SK-N-SH (cell line): ENCODE measurements at regions of chr9 and their contacts with region 1.

Region 1: DNA sequence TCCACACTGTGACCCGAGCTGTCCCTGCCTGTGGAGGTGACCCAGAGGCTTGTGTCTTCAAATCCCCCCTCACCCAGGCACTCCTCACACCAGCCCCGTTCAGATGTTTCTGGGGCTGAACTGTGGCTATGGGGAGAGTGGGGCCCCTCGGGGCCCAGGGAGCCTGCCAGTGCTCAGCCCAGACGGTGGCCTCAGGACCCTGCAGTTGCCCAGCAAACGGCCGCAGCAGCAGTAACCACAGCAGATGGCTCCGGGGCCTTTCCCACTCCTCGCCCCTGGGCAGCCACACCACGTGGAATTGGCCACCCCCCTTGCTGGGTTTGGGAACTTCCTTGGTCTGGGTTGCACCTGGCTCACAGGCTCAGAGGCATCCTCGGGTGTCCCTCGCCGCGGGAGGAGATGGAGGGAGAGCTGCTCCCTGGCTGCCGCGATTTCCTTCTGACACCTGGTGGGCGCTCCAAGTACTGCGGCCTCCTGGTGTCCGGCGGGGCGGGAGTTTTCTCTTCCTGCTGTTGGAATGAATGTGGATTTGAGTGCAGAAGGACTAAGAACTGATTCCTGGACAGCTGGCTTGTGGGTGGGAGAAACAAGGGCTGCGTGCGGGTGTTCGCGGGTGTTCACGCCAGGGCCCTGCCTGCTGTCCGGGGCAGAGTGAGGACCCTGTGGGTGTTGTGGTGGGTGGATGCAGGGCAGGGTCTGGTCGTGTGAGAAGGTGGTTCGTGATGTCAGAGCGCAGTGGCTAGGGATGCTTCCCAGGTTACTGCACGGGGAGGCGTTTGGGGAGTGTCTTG is 97.5 kb downstream of the COL5A1 start:
- DNase-seq: peak; percentile 94
- H3K4me3 ChIP-seq: no peak overlapping the region
- H3K27ac ChIP-seq: 0 out of 4 replicates have a peak overlapping the region, but pooled peaks of 1 of the 2 experiments have one; percentile 18
- H3K4me1 ChIP-seq: peaks cover 4 to 12% of the 10 kb centered on the region in 2 experiments; a peak in 2 of 4 replicates
- H3K27me3 ChIP-seq: no peaks in the 10 kb centered on the region
- CTCF ChIP-seq: peak; percentile 77
- EP300 ChIP-seq: no peak
- RAD21 ChIP-seq: peak; percentile 91

Region 2: DNA sequence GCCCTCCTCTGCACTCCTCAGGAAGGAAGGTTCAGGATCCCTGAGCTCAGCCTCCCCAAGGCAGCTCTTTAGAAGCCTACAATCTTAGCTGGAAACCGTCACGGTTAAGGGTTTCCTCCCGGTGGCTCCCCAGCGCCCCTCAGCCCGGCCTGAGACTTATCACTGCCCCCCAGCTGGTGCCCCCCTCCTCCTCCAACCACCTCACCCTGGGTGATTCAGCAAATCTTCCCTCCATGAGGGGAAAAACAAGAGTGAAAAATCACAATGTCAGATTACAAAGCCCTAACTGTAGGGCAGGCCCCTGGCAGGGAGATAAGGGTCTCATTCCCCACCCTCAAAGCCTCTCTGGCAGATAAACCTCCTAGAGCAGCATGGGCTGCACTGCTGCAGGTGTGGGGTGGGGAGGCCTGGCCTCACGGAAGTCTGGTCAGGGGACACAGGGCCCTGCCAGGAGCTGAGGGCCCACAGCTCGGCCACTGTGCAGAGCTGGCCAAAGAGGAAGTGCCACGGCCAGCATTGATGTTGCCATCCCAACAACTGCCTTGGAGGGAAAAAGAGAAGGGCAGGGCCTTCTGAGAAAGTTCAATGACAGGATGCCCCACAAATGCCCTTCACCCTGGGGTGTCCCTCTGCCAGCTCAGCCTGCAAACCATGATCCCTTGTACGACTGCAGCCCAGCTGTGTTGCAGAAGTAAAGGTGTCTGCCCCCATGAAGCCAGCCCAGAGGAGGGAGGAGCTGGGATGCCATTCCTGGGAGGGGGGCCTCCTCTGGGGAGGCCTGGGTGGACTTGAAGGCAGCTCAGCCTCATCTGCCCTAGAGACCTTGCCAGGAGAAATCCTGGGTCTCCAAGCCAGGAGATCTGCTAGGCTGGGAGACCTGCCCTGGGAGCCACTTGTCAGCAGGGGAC is 1734.7 kb before region 1 on chr9:
- CTCF ChIA-PET with region 1: no interaction called
- POLR2A ChIA-PET with region 1: no interaction called
- DNase-seq: peak; percentile 20
- H3K4me3 ChIP-seq: no peak overlapping the region
- H3K27ac ChIP-seq: no peak overlapping the region
- H3K4me1 ChIP-seq: no peaks in the 10 kb centered on the region; a peak in 1 of 4 replicates
- H3K27me3 ChIP-seq: peaks cover 18% of the 10 kb centered on the region; the same call in 1 of the 2 replicates
- CTCF ChIP-seq: no peak
- EP300 ChIP-seq: no peak
- RAD21 ChIP-seq: no peak

Region 3: GRCh38 chr9:134024828-134025605 is 714.0 kb before region 1 on chr9 and contains the start of gene BRD3OS:
- CTCF ChIA-PET with region 1: no interaction called
- POLR2A ChIA-PET with region 1: no interaction called
- DNase-seq: peak; percentile 95
- H3K4me3 ChIP-seq: peak within 1 kb of the TSS; percentile 74 to 80
- H3K27ac ChIP-seq: peak within 1 kb of the TSS; percentile 58 to 74
- H3K4me1 ChIP-seq: peaks cover 0 to 12% of the 10 kb centered on the region in 2 experiments; a peak in 1 of 4 replicates
- H3K27me3 ChIP-seq: no peaks in the 10 kb centered on the region
- CTCF ChIP-seq: no peak
- EP300 ChIP-seq: no peak
- RAD21 ChIP-seq: no peak
- polyA plus RNA-seq, gene BRD3OS: 21.6 and 23.1 TPM in 2 replicates

Region 4: DNA sequence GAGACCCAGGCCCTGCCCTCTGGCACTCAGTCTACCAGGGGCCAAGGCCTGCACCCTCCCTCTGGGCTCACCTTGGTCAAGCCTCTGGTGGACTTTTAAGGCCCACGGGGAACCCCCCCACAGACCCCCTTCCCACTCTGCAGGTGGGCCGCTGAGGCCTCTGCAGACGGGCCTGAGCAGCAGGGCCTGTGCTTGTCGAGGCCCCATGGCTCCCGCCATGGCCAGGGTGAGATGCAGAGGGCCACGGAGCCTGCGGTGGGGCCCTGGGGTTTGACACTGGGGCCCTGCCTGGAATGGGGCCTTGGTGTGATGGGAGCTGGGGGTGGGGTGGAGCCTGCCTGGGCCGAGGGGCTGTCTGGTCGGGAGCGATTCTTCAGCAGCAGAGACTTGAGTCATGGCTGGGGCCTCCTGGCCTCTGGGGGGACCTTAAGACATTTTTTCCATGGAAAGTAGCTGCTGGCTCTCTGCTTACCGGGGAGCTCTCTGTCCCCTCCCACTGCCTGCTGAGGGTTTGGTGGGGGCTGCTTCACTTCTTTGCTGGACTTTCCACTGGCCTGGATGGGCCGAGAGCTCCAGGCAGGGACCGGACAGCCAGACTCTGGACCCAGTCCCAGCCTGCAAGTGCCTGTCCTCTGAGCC is 280.7 kb before region 1 on chr9:
- CTCF ChIA-PET with region 1: interaction called, 12 read pairs
- POLR2A ChIA-PET with region 1: no interaction called
- DNase-seq: no peak
- H3K4me3 ChIP-seq: no peak overlapping the region
- H3K27ac ChIP-seq: peak overlapping the region in 1 of 2 experiments; percentile 47; a peak in 2 of 4 replicates
- H3K4me1 ChIP-seq: peaks cover 17 to 19% of the 10 kb centered on the region in 2 experiments; a peak in 3 of 4 replicates
- H3K27me3 ChIP-seq: no peaks in the 10 kb centered on the region; the same call in 1 of the 2 replicates
- CTCF ChIP-seq: no peak
- EP300 ChIP-seq: no peak
- RAD21 ChIP-seq: no peak

Region 5: GRCh38 chr9:134698587-134699342 is 40.3 kb before region 1 on chr9:
- CTCF ChIA-PET with region 1: interaction called, 348 read pairs
- POLR2A ChIA-PET with region 1: no interaction called
- DNase-seq: peak; percentile 91
- H3K4me3 ChIP-seq: peak overlapping the region in 1 of 2 experiments; percentile 51; a peak in 1 of 4 replicates
- H3K27ac ChIP-seq: no peak overlapping the region
- H3K4me1 ChIP-seq: peaks cover 0 to 6% of the 10 kb centered on the region in 2 experiments; a peak in 1 of 4 replicates
- H3K27me3 ChIP-seq: no peaks in the 10 kb centered on the region
- CTCF ChIP-seq: peak; percentile 82
- EP300 ChIP-seq: no peak
- RAD21 ChIP-seq: peak; percentile 95

Region 6: GRCh38 chr9:134724202-134724911 is 14.7 kb before region 1 on chr9:
- CTCF ChIA-PET with region 1: interaction called, 18 read pairs
- POLR2A ChIA-PET with region 1: no interaction called
- DNase-seq: no peak
- H3K4me3 ChIP-seq: no peak overlapping the region
- H3K27ac ChIP-seq: no peak overlapping the region
- H3K4me1 ChIP-seq: no peaks in the 10 kb centered on the region
- H3K27me3 ChIP-seq: no peaks in the 10 kb centered on the region
- CTCF ChIP-seq: no peak
- EP300 ChIP-seq: no peak
- RAD21 ChIP-seq: no peak

Region 7: GRCh38 chr9:134751622-134752021 is 12.6 kb after region 1 on chr9:
- CTCF ChIA-PET with region 1: interaction called, 21 read pairs
- POLR2A ChIA-PET with region 1: no interaction called
- DNase-seq: no peak
- H3K4me3 ChIP-seq: no peak overlapping the region
- H3K27ac ChIP-seq: no peak overlapping the region
- H3K4me1 ChIP-seq: no peaks in the 10 kb centered on the region
- H3K27me3 ChIP-seq: no peaks in the 10 kb centered on the region
- CTCF ChIP-seq: no peak
- EP300 ChIP-seq: no peak
- RAD21 ChIP-seq: no peak

Region 8: GRCh38 chr9:134778841-134779411 is 39.9 kb after region 1 on chr9:
- CTCF ChIA-PET with region 1: interaction called, 13 read pairs
- POLR2A ChIA-PET with region 1: no interaction called
- DNase-seq: peak; percentile 84
- H3K4me3 ChIP-seq: no peak overlapping the region
- H3K27ac ChIP-seq: no peak overlapping the region
- H3K4me1 ChIP-seq: peaks cover 0 to 13% of the 10 kb centered on the region in 2 experiments; a peak in 1 of 4 replicates
- H3K27me3 ChIP-seq: no peaks in the 10 kb centered on the region
- CTCF ChIP-seq: peak; percentile 58
- EP300 ChIP-seq: no peak
- RAD21 ChIP-seq: peak; percentile 63

Region 9: DNA sequence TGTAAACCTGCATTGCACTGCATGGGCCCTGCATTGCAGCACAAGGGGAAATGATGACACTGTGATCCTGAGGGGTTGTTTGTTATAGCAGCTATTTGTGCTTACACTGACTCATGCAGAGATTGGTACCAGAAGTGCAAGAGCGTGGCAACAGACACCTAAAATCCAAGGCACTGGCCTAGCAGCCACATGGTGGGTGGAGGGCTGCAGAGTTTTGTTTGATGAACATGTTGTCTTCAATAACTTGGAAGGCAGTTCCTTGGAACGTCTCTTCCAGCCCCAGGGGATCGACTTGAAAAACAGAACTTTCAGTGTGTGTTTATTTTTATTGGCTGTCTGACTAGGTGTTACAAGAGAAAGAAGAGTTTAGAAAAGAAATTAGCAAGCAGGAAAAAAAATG is 156.0 kb after region 1 on chr9:
- CTCF ChIA-PET with region 1: no interaction called
- POLR2A ChIA-PET with region 1: no interaction called
- DNase-seq: no peak
- H3K4me3 ChIP-seq: no peak overlapping the region
- H3K27ac ChIP-seq: no peak overlapping the region
- H3K4me1 ChIP-seq: peaks cover 0 to 9% of the 10 kb centered on the region in 2 experiments; a peak in 2 of 4 replicates
- H3K27me3 ChIP-seq: no peaks in the 10 kb centered on the region
- CTCF ChIP-seq: no peak
- EP300 ChIP-seq: no peak
- RAD21 ChIP-seq: no peak